A549 (cell line): ENCODE measurements at regions of chr2 and their contacts with region 1.

Region 1: DNA sequence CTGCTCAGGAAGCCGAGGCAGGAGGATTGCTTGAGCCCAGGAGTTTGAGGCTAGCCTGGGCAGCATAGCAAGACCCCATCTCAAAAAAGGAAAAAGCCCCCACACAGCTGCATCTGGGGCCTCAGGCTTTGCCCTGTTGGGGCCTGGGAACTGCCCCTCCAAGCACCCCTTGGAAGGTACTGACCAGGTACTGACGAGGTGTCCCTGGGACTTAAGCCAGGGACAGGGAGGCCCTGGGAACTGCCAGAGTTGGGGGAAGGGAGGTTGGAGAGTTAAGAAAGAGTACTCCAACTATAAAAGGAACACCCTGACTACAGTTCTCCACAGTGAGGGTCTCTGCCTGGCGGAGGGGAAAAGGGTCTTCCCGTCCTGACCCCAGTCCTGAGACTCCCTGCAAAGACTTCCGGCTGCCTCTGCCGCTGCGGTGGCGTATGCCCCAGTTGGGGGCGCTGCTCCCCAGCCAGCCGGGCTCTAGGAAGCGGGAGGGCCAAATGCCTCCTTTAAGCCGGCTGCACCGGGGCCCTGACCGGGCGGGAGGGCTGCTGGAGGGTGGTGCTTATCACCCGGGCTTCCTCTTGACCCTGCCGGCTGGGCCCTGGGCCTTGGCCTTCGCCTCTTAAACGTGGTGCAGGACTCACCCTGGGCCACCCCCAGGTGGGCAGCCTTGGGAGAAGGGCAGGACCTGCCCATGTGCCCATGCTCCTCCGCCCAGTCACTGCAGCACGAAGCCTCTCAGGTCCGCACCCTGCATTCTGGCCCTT is 12.8 kb downstream of the SLC30A3 start:
- DNase-seq: peak; percentile 65 to 79
- ATAC-seq: peak; percentile 71 to 87
- H3K4me3 ChIP-seq: no peak overlapping the region
- H3K27ac ChIP-seq: peak overlapping the region; percentile 11 to 62; a peak in 3 of 6 replicates
- H3K4me1 ChIP-seq: peaks cover 15% of the 10 kb centered on the region
- CTCF ChIP-seq: peak; percentile 84
- EP300 ChIP-seq: no peak
- POLR2A ChIP-seq: no peak
- RAD21 ChIP-seq: peak; percentile 89 to 91

Region 2: GRCh38 chr2:27233341-27233740 is 16.7 kb before region 1 on chr2:
- CTCF ChIA-PET with region 1: interaction called, 18 read pairs
- POLR2A ChIA-PET with region 1: no interaction called
- DNase-seq: no peak
- ATAC-seq: no peak
- H3K4me3 ChIP-seq: no peak overlapping the region
- H3K27ac ChIP-seq: no peak overlapping the region
- H3K4me1 ChIP-seq: no peaks in the 10 kb centered on the region
- CTCF ChIP-seq: no peak
- EP300 ChIP-seq: no peak
- POLR2A ChIP-seq: no peak
- RAD21 ChIP-seq: no peak